ENCODE measurements at regions of chr2 and their contacts with region 1.

Region 1: GRCh38 chr2:65432227-65433190 is at the start of gene SPRED2:
- DNase-seq: peak; percentile 98
- total RNA-seq, gene SPRED2: 21.9 to 28.3 TPM

Region 2: DNA sequence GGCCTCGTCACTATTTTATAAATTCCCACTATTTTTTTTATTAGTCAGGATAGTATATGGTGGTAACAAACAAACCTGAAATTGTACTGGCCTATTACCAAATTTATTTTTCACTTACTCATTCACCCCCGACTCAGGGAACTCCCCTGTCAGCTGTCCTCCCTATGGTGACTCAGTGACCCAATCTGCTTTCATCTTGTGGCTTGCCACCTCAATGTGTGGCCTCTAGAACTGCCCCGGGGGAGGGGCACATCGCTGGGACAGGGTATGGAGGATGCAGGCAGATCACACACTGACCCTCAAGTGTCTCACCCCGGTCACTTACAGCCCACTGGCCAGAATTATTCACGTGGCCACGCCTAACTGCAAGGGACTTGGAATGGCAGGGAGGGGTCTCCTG is 133.3 kb before region 1 on chr2:
- intact Hi-C with region 1: loop called in 1 of 2 experiments (anchors 10 kb)
- DNase-seq: no peak

Region 3: DNA sequence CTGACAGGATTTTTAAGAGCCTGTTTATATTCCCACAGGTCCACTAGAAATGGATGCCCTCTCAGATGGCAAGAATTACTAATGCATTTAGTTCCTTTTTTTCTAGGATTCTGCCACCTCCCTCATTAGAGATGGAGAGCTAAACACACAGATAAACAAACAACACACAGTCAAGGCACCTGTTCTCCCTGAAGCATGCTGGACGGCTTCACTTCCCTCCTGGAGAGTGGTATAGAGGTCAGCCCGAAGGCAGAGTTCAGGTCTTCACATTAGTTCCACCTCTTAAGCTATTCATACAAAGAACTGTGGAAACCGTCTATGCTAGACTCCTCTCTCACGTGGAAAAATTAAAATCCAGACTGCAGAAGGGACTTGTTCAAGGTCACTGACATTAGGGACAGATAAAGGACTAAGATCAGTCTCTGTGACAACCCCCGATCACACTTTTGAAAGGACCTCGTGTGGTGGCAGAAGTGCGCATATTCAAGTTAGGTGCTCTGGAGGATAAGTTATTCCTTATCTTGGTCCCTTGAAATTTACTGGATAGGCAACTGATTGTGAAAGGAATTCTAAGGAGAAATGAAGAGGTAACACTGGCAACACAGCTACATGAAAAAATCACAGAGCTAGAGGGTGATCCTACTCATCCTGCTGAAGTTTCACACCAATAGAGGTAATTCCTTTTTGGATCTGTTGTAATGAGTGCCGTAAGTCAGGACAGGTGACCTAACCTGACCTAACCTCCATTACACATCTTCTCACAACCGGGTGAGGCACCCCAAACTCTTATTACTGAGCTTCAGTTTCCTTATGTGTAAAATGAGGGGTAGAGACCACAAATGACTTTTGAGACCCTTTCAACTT is 75.2 kb before region 1 on chr2:
- intact Hi-C with region 1: no loop called
- DNase-seq: no peak

Region 4: DNA sequence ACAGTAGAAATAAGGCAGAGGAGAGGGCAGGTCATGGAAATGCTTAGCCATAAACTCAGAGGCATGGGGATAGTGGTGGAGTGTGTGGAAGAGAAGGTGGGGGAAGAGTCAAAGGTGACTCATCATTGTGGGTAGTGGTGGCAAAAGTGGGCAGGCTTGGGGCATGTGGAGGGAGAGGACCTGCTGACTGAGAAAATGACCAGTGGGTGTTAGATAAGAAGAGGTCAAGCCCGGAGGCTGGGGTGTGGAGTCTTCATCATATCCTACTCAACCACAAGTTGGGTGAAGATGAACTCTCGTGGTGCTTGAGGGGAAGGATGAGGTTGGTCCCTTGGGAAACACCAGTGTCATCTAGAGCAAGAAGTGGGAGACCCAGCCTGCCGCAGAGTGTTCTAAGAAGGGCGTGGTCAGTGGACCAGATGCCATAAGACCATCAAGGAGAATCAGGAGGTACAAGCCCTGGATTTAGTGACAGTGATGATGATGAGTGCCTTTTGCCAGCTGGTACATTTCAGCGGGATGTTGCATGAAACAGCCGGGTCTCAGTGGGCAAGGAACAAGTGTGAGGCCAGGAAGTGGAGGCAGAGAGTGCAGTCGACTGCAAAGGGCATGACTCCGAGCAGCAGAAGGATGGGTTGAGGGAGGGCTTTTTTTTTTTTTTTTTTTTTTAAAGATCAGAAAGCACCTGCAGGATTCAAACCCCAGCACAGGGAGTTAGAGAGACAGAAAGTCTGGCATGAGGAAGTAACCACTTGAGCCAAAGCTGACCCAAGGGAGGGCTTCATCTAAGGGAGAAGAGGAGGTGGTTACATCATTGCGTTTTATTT is 122.5 kb after region 1 on chr2:
- intact Hi-C with region 1: loop called (anchors 2 to 10 kb)
- DNase-seq: no peak

Measured in posterior vena cava (tissue), 2 donors.